ENCODE measurements at regions of chr7 and their contacts with region 1.

Region 1: DNA sequence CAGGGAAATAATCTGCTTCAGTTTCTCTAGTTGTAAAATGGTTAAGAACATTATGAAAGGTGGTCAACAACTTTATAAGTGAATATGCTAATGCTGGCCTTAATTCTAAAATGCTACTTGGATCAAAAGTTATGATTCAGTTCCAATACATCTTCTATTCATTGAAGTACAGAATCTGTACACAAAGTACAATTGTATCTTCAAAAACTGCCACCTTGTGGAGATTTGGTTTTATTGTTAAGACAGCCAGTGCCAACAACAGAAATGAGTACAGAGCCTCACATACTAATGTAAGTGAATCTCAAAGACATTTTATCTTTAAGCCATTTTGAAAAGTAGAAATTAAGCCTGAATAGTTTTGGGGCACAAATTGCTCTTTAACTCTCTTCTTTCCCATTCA is 194.0 kb downstream of the CFTR start:
- DNase-seq: peak; percentile 37
- H3K4me3 ChIP-seq: no peak overlapping the region
- H3K27ac ChIP-seq: no peak overlapping the region
- H3K4me1 ChIP-seq: no peaks in the 10 kb centered on the region
- H3K27me3 ChIP-seq: peaks cover 6% of the 10 kb centered on the region
- CTCF ChIP-seq: peak; percentile 8 to 42

Region 2: GRCh38 chr7:117399820-117400422 is 273.9 kb before region 1 on chr7:
- CTCF ChIA-PET with region 1: no interaction called
- dilution Hi-C with region 1: no loop called
- in situ Hi-C with region 1: no loop called
- intact Hi-C with region 1: loop called (anchors 1 kb)
- DNase-seq: no peak
- H3K4me3 ChIP-seq: no peak overlapping the region
- H3K27ac ChIP-seq: no peak overlapping the region
- H3K4me1 ChIP-seq: no peaks in the 10 kb centered on the region
- H3K27me3 ChIP-seq: peaks cover 2% of the 10 kb centered on the region
- CTCF ChIP-seq: peak; percentile 43 to 61

Region 3: GRCh38 chr7:117435475-117436043 is 238.3 kb before region 1 on chr7:
- CTCF ChIA-PET with region 1: no interaction called
- dilution Hi-C with region 1: no loop called
- in situ Hi-C with region 1: no loop called
- intact Hi-C with region 1: no loop called
- DNase-seq: peak; percentile 97
- H3K4me3 ChIP-seq: no peak overlapping the region
- H3K27ac ChIP-seq: peak overlapping the region; percentile 58
- H3K4me1 ChIP-seq: peaks cover 8% of the 10 kb centered on the region
- H3K27me3 ChIP-seq: no peaks in the 10 kb centered on the region
- CTCF ChIP-seq: no peak

Region 4: GRCh38 chr7:117458977-117459583 is 214.8 kb before region 1 on chr7:
- CTCF ChIA-PET with region 1: no interaction called
- dilution Hi-C with region 1: no loop called
- in situ Hi-C with region 1: no loop called
- intact Hi-C with region 1: loop called (anchors 2 kb)
- DNase-seq: no peak
- H3K4me3 ChIP-seq: no peak overlapping the region
- H3K27ac ChIP-seq: no peak overlapping the region
- H3K4me1 ChIP-seq: no peaks in the 10 kb centered on the region
- H3K27me3 ChIP-seq: no peaks in the 10 kb centered on the region
- CTCF ChIP-seq: peak; percentile 55 to 62

Region 5: DNA sequence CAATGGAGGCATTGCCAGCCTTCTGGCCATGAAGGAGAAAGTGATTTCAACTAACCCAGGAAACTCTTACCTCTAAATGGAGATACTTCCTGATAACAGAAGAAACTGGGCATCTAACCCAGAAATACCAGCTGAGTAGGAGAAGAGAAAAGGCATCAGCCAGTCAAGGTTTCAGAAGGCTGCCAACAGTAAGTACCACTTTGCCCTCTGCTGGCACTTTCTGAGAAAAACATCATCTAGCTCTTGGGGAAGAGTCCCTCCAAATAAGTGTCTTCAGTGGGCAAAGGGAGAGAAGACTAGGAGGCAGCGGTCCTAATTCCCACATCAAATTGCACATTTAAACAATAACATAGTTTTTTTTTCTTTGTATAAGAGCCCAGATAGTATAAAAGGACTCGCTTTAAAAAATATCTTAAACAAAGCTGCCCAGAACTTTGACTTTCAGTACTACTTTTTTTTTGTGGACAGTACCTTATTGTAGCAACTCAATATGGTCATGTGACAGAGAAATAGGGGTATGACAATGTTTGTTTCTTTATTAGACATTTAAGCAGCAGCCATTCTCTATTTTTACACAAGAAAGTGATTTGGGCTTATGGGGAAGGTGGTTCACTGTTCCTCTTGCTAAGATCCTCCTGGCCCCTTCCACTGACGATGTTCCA is 42.1 kb after region 1 on chr7:
- CTCF ChIA-PET with region 1: no interaction called
- dilution Hi-C with region 1: no loop called
- in situ Hi-C with region 1: no loop called
- intact Hi-C with region 1: loop called (anchors 5 kb)
- DNase-seq: peak; percentile 37
- H3K4me3 ChIP-seq: no peak overlapping the region
- H3K27ac ChIP-seq: no peak overlapping the region
- H3K4me1 ChIP-seq: no peaks in the 10 kb centered on the region
- H3K27me3 ChIP-seq: no peaks in the 10 kb centered on the region
- CTCF ChIP-seq: peak; percentile 45 to 75